Left ventricle myocardium inferior (tissue), 1 donor: ENCODE measurements at regions of chr20 and their contacts with region 1.

Region 1: DNA sequence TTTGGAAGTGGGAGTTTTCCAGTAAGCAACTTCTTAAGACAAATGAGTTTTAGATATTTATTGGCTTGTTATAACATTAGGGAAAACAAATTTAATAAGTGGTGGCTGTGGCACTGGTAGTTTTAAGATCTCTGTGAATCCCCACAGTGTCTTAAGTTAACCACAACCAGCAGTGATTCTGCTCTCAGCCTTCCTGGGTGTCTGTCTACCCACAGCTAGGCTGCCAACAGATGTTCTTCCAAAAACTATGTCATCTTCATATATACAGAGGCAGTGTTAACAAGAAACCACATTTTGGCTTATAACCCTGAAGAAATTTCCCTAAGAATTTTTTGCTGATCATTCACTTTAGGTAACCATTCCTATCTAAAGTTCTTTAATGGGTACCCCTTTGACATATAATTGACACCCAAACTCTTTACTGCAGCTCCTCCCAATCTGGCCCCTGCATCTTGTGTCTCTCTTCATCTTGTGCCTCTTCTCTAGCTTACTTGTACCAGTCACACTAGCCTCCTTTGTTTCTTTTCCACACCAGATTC is 52.7 kb downstream of the TOP1 start:
- DNase-seq: no peak
- H3K4me3 ChIP-seq: no peak overlapping the region
- H3K27ac ChIP-seq: no peak overlapping the region
- H3K4me1 ChIP-seq: peaks cover 34% of the 10 kb centered on the region
- H3K27me3 ChIP-seq: no peaks in the 10 kb centered on the region
- CTCF ChIP-seq: no peak

Region 2: GRCh38 chr20:40786336-40786735 is 295.0 kb before region 1 on chr20:
- intact Hi-C with region 1: no loop called
- DNase-seq: no peak
- H3K4me3 ChIP-seq: no peak overlapping the region
- H3K27ac ChIP-seq: no peak overlapping the region
- H3K4me1 ChIP-seq: no peaks in the 10 kb centered on the region
- H3K27me3 ChIP-seq: peaks cover 43% of the 10 kb centered on the region
- CTCF ChIP-seq: no peak

Region 3: DNA sequence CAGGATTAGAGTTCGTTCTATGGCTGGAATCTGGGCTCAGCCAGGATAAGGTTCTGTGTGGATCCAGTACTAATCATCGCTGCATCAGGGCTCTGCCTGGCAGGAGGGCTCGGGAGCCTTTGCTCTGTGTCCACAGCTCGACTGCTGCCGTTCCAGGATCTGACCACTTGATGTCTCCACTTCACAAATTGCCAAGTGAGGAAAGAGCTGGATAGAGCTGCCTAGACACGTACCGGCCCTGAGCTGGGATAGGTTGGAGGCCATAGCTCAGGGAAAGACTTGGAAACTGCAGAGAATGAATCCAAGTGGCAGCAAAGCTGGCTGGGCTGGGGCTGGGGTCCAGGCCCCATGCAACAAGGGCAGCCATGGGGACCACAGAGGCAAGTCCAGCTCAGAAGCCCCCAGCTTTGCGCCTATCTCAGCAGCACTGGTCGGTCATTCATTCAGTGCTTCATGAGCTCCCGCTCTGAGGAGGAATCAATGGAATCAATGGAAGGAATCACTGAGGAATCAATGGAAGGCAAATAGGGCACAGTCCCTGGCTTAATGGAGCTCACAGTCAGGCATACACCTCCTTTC is 90.7 kb before region 1 on chr20:
- intact Hi-C with region 1: loop called (anchors 5 kb)
- DNase-seq: peak; percentile 73
- H3K4me3 ChIP-seq: no peak overlapping the region
- H3K27ac ChIP-seq: no peak overlapping the region
- H3K4me1 ChIP-seq: peaks cover 10% of the 10 kb centered on the region
- H3K27me3 ChIP-seq: no peaks in the 10 kb centered on the region
- CTCF ChIP-seq: peak; percentile 88

Region 4: GRCh38 chr20:41017390-41018042 is 63.8 kb before region 1 on chr20:
- intact Hi-C with region 1: no loop called
- DNase-seq: no peak
- H3K4me3 ChIP-seq: no peak overlapping the region
- H3K27ac ChIP-seq: no peak overlapping the region
- H3K4me1 ChIP-seq: peaks cover 6% of the 10 kb centered on the region
- H3K27me3 ChIP-seq: no peaks in the 10 kb centered on the region
- CTCF ChIP-seq: no peak